Endothelial cell of umbilical vein (primary cell): ENCODE measurements at regions of chr10 and their contacts with region 1.

Region 1: GRCh38 chr10:102802920-102803534 is 34.2 kb downstream of the CYP17A1 start:
- DNase-seq: peak; percentile 99
- H3K4me3 ChIP-seq: no peak overlapping the region
- H3K27ac ChIP-seq: peak overlapping the region; percentile 95
- H3K4me1 ChIP-seq: peaks cover 46% of the 10 kb centered on the region
- H3K27me3 ChIP-seq: no peaks in the 10 kb centered on the region
- CTCF ChIP-seq: no peak
- POLR2A ChIP-seq: peak; percentile 52

Region 2: DNA sequence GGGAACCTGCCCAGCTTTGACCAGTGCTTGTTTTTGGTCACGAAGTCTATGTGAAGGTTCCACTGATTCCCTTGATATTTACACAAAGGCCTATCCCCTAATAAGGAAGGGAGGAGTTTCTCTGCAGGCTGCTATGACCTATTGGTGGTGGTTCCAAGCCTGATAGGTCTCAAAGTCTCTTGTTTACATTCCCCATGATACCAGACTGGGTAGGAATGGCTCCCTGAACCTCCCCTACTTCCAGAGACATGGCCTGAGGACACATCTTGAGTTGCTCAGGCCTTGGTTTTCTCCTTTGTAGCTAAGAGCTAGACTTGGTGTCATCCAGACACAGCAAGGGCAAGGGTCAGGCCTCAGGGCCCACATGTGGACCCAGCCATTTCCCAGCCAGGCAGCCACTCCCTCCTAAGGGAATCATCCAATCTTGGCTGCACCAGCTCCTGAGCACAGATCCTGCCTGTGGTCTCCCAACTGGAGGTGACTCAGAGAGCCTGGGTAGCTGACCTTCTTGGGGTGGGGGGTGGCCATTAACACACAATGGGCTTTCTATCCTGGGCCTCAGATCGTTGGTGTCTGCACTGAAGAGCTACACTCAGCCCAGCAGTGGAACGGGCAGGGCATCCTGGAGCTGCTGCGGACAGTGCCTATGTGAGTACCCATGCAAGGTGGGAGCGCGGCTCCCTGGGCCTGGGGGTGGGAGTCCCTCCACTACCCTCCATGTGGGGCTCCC is 209.8 kb before region 1 on chr10:
- CTCF ChIA-PET with region 1: no interaction called
- POLR2A ChIA-PET with region 1: no interaction called
- dilution Hi-C with region 1: no loop called
- intact Hi-C with region 1: no loop called
- DNase-seq: no peak
- H3K4me3 ChIP-seq: no peak overlapping the region
- H3K27ac ChIP-seq: no peak overlapping the region
- H3K4me1 ChIP-seq: peaks cover 31% of the 10 kb centered on the region
- H3K27me3 ChIP-seq: no peaks in the 10 kb centered on the region
- CTCF ChIP-seq: no peak
- POLR2A ChIP-seq: no peak

Region 3: GRCh38 chr10:102743588-102744373 is 59.2 kb before region 1 on chr10 and contains the start of gene WBP1L:
- CTCF ChIA-PET with region 1: interaction called, 3 read pairs
- POLR2A ChIA-PET with region 1: no interaction called
- dilution Hi-C with region 1: no loop called
- intact Hi-C with region 1: loop called (anchors 1 kb)
- DNase-seq: peak; percentile 100
- H3K4me3 ChIP-seq: peak within 1 kb of the TSS; percentile 43 to 91 (median 52)
- H3K27ac ChIP-seq: peak within 1 kb of the TSS; percentile 35
- H3K4me1 ChIP-seq: peaks cover 15% of the 10 kb centered on the region
- H3K27me3 ChIP-seq: no peaks in the 10 kb centered on the region
- CTCF ChIP-seq: no peak
- POLR2A ChIP-seq: peak; percentile 45
- total RNA-seq, gene WBP1L: 43.6 and 46.0 TPM in 2 replicates

Region 4: GRCh38 chr10:102782673-102783551 is 20.1 kb before region 1 on chr10:
- CTCF ChIA-PET with region 1: interaction called, 11 read pairs
- POLR2A ChIA-PET with region 1: interaction called, 7 read pairs
- dilution Hi-C with region 1: no loop called
- intact Hi-C with region 1: loop called (anchors 1 kb)
- DNase-seq: peak; percentile 97
- H3K4me3 ChIP-seq: peak overlapping the region in 1 of 3 experiments; percentile 24
- H3K27ac ChIP-seq: peak overlapping the region; percentile 77
- H3K4me1 ChIP-seq: peaks cover 49% of the 10 kb centered on the region
- H3K27me3 ChIP-seq: no peaks in the 10 kb centered on the region
- CTCF ChIP-seq: no peak
- POLR2A ChIP-seq: no peak

Region 5: DNA sequence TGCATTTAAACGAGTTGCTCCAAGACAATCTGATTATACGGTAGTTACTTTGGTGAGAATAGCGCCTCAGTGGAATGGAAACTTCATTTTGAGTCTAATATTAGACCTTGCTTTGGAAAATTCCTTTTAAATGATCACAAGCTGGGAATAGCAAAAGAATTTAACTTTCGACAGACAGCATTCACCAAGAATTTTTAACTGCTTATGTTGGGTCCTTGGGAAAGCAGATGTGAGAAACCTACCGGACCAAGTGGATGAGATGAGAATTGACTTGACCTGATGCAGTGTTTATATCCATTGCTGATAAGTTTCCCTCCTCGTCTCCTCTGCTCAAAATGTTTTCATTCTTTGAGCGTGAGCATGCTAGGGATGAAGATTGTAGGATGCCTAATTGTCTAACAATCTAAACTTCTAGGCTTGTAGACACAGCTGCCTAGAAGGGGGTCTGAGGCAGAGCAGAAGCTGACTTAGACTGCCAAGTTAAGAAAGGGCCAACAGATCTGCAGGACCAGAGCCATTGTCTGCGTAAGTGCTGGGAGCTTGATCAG is 242.0 kb after region 1 on chr10:
- CTCF ChIA-PET with region 1: no interaction called
- POLR2A ChIA-PET with region 1: no interaction called
- dilution Hi-C with region 1: no loop called
- intact Hi-C with region 1: no loop called
- DNase-seq: no peak
- H3K4me3 ChIP-seq: no peak overlapping the region
- H3K27ac ChIP-seq: no peak overlapping the region
- H3K4me1 ChIP-seq: no peaks in the 10 kb centered on the region
- H3K27me3 ChIP-seq: peaks cover 0 to 10% of the 10 kb centered on the region in 2 experiments
- CTCF ChIP-seq: no peak
- POLR2A ChIP-seq: no peak